ENCODE measurements at regions of chr1 and their contacts with region 1.

Region 1: GRCh38 chr1:221725735-221726672 is 15.9 kb downstream of the DUSP10 start:
- DNase-seq: peak; percentile 60
- ATAC-seq: no peak
- H3K4me3 ChIP-seq: no peak overlapping the region
- H3K27ac ChIP-seq: peak overlapping the region; percentile 56; the same call in 1 of the 2 replicates
- H3K4me1 ChIP-seq: peaks cover 46% of the 10 kb centered on the region
- H3K27me3 ChIP-seq: no peaks in the 10 kb centered on the region
- CTCF ChIP-seq: no peak
- POLR2A ChIP-seq: no peak
- RAD21 ChIP-seq: no peak

Region 2: GRCh38 chr1:221263831-221264767 is 461.9 kb before region 1 on chr1:
- CTCF ChIA-PET with region 1: no interaction called
- POLR2A ChIA-PET with region 1: no interaction called
- dilution Hi-C with region 1: no loop called
- in situ Hi-C with region 1: no loop called
- intact Hi-C with region 1: loop called (anchors 10 kb)
- DNase-seq: peak; percentile 89
- ATAC-seq: peak; percentile 81
- H3K4me3 ChIP-seq: no peak overlapping the region
- H3K27ac ChIP-seq: no peak overlapping the region
- H3K4me1 ChIP-seq: peaks cover 2% of the 10 kb centered on the region; the same call in 1 of the 2 replicates
- H3K27me3 ChIP-seq: no peaks in the 10 kb centered on the region
- CTCF ChIP-seq: peak; percentile 68
- POLR2A ChIP-seq: no peak
- RAD21 ChIP-seq: peak; percentile 77

Region 3: DNA sequence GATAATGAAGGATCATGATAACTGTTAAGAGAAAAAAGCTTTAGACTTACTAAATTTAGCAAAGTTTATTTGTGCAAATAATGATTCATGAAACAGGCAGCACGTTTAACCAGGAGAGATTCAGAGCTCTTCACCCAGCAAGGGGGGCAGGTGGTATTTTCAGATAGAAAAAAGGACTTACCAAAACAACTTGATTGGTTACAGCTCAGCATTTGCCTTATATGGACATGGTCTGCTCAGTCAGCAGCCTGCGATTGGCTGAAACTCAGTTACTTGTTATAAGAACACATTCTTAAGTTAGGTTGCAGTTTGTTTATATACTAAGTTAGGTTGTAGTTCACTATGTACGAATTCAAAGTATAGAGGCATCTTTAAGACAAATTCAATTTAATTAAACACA is 149.7 kb before region 1 on chr1:
- CTCF ChIA-PET with region 1: no interaction called
- POLR2A ChIA-PET with region 1: no interaction called
- dilution Hi-C with region 1: no loop called
- in situ Hi-C with region 1: no loop called
- intact Hi-C with region 1: no loop called
- DNase-seq: peak; percentile 96
- ATAC-seq: peak; percentile 84
- H3K4me3 ChIP-seq: no peak overlapping the region
- H3K27ac ChIP-seq: peak overlapping the region; percentile 22; the same call in 1 of the 2 replicates
- H3K4me1 ChIP-seq: peaks cover 6% of the 10 kb centered on the region
- H3K27me3 ChIP-seq: no peaks in the 10 kb centered on the region
- CTCF ChIP-seq: no peak
- POLR2A ChIP-seq: no peak
- RAD21 ChIP-seq: no peak

Region 4: GRCh38 chr1:221692643-221693042 is 33.4 kb before region 1 on chr1:
- CTCF ChIA-PET with region 1: no interaction called
- POLR2A ChIA-PET with region 1: interaction called, 14 read pairs
- dilution Hi-C with region 1: no loop called
- in situ Hi-C with region 1: no loop called
- intact Hi-C with region 1: no loop called
- DNase-seq: no peak
- ATAC-seq: no peak
- H3K4me3 ChIP-seq: no peak overlapping the region
- H3K27ac ChIP-seq: no peak overlapping the region
- H3K4me1 ChIP-seq: peaks cover 8% of the 10 kb centered on the region
- H3K27me3 ChIP-seq: no peaks in the 10 kb centered on the region
- CTCF ChIP-seq: no peak
- POLR2A ChIP-seq: no peak
- RAD21 ChIP-seq: no peak